ENCODE measurements at regions of chr1 and their contacts with region 1.

Region 1: GRCh38 chr1:152459596-152460528 is 45.8 kb upstream of the CRNN start:
- DNase-seq: peak; percentile 63 to 73
- H3K4me3 ChIP-seq: no peak overlapping the region
- H3K4me3 Mint-ChIP-seq: no peak overlapping the region
- H3K27ac Mint-ChIP-seq: no peak overlapping the region
- H3K4me1 ChIP-seq: no peaks in the 10 kb centered on the region
- H3K4me1 Mint-ChIP-seq: no peaks in the 10 kb centered on the region
- H3K27me3 ChIP-seq: no peaks in the 10 kb centered on the region
- H3K27me3 Mint-ChIP-seq: no peaks in the 10 kb centered on the region
- CTCF ChIP-seq: peak; percentile 82 to 84

Region 2: DNA sequence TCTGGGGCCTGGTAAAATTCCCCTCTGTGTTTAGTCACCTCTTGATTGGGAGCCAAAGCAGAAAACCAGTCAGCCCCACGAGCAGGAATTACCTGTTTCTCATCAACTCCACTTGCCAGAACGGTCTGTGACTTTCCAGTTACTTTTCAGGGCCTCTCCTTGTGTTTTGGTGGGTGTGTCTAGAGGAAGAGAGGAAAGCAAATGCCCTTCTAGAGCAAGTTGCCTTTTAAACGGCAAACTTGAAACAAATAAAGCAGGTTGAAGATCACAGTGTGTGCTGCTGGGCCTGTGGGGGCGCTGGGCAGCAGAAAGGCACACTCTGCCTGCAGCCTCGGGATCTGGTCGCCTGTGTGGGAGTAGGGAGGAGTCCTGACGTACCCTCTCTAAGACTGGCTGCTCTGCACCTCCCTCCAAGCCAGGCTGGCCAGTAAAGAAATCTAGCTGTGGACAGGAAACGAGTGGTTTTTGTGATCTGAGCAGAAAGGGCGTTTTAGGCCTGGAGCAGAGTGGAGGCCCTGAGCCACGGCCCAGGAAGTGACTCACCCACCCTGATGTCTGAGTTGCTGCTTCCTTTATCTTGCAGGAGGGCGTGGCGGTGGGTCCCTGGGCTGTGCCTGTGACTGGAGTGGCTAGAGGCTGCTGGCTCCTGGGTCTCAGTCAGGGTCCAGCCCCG is 412.0 kb before region 1 on chr1:
- CTCF ChIA-PET with region 1: interaction called, 6 read pairs
- POLR2A ChIA-PET with region 1: no interaction called
- intact Hi-C with region 1: loop called (anchors 5 kb)
- DNase-seq: peak; percentile 92 to 95
- H3K4me3 ChIP-seq: peak overlapping the region; percentile 25
- H3K4me3 Mint-ChIP-seq: peak overlapping the region; percentile 72
- H3K27ac Mint-ChIP-seq: peak overlapping the region; percentile 96
- H3K4me1 ChIP-seq: peaks cover 14% of the 10 kb centered on the region
- H3K4me1 Mint-ChIP-seq: peaks cover 21% of the 10 kb centered on the region
- H3K27me3 ChIP-seq: no peaks in the 10 kb centered on the region
- H3K27me3 Mint-ChIP-seq: peaks cover 2% of the 10 kb centered on the region
- CTCF ChIP-seq: peak; percentile 63 to 80

Region 3: GRCh38 chr1:152189657-152190442 is 270.0 kb before region 1 on chr1:
- CTCF ChIA-PET with region 1: interaction called, 10 read pairs
- POLR2A ChIA-PET with region 1: no interaction called
- intact Hi-C with region 1: loop called (anchors 1 kb)
- DNase-seq: peak; percentile 65 to 70
- H3K4me3 ChIP-seq: no peak overlapping the region
- H3K4me3 Mint-ChIP-seq: peak overlapping the region; percentile 63
- H3K27ac Mint-ChIP-seq: no peak overlapping the region
- H3K4me1 ChIP-seq: no peaks in the 10 kb centered on the region
- H3K4me1 Mint-ChIP-seq: no peaks in the 10 kb centered on the region
- H3K27me3 ChIP-seq: peaks cover 1% of the 10 kb centered on the region; the same call in 1 of the 2 replicates
- H3K27me3 Mint-ChIP-seq: peaks cover 7% of the 10 kb centered on the region
- CTCF ChIP-seq: peak; percentile 81 to 84

Region 4: DNA sequence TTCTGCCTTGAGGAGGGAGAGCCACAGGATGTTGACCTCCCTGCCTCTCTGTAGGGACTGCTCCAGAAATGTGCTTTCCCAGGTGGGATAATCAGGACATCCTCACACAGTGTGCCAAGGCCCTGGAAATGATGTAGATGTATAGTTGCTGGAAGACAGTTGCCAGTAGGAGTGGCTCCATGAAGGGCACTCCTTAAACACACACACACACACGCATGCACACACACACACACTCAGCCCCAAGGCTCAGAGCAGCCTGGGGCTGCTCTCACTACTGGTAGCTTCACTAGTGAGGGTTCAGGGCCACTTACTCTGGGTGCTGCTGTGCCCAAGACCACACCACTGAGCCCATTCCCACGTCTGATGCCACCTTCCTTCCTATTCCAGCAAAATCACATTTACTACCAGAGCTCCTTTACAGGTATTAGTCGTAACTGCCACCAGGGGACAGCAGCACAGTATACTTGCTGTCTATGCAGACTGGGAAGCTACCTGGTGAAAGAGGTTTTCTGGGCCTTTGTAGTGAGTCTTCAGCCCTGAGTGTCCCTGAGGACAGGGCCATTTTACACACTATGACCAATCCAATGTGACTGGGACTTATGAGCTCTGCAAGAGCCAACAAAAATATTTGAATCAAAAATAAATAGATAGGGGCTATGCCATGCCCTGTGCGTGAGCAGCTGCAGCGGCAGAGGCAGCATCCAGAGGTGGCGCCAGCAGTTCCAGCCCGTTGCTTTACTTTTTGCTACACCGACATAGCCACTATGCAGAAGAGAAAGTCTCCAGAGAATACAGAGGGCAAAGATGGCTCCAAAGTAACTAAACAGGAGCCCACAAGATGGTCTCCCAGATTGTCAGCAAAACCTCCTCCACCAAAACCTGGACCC is 60.8 kb before region 1 on chr1:
- CTCF ChIA-PET with region 1: interaction called, 118 read pairs
- POLR2A ChIA-PET with region 1: interaction called, 3 read pairs
- intact Hi-C with region 1: loop called (anchors 1 kb)
- DNase-seq: peak; percentile 50 to 55
- H3K4me3 ChIP-seq: no peak overlapping the region
- H3K4me3 Mint-ChIP-seq: no peak overlapping the region
- H3K27ac Mint-ChIP-seq: no peak overlapping the region
- H3K4me1 ChIP-seq: no peaks in the 10 kb centered on the region
- H3K4me1 Mint-ChIP-seq: no peaks in the 10 kb centered on the region
- H3K27me3 ChIP-seq: no peaks in the 10 kb centered on the region
- H3K27me3 Mint-ChIP-seq: peaks cover 11% of the 10 kb centered on the region
- CTCF ChIP-seq: peak; percentile 61 to 79

Region 5: DNA sequence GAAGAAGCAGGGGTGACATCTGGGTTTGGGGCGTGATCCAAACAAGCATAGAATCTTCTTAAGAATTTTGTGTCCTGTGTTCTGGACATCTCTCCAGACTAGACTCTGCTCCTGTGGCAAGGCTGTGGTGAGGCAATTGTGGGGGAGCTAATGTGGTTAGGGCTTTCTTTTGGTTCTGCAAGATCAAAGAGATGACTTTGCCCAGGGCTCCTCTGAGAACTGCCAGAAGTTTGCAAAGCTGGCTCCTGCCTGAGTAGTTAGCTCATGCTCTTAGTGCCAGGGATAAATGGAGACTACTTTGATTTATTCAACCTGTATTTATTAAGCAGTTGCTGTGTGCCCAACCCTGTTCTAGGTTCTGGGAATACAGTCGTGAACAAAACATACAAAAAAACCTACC is 11.8 kb before region 1 on chr1:
- CTCF ChIA-PET with region 1: interaction called, 26 read pairs
- POLR2A ChIA-PET with region 1: no interaction called
- intact Hi-C with region 1: no loop called
- DNase-seq: no peak
- H3K4me3 ChIP-seq: no peak overlapping the region
- H3K4me3 Mint-ChIP-seq: no peak overlapping the region
- H3K27ac Mint-ChIP-seq: no peak overlapping the region
- H3K4me1 ChIP-seq: no peaks in the 10 kb centered on the region
- H3K4me1 Mint-ChIP-seq: no peaks in the 10 kb centered on the region
- H3K27me3 ChIP-seq: peaks cover 1% of the 10 kb centered on the region
- H3K27me3 Mint-ChIP-seq: peaks cover 4% of the 10 kb centered on the region
- CTCF ChIP-seq: no peak